Heart right ventricle (tissue), 16 donors: ENCODE measurements at regions of chr9 and their contacts with region 1.

Region 1: DNA sequence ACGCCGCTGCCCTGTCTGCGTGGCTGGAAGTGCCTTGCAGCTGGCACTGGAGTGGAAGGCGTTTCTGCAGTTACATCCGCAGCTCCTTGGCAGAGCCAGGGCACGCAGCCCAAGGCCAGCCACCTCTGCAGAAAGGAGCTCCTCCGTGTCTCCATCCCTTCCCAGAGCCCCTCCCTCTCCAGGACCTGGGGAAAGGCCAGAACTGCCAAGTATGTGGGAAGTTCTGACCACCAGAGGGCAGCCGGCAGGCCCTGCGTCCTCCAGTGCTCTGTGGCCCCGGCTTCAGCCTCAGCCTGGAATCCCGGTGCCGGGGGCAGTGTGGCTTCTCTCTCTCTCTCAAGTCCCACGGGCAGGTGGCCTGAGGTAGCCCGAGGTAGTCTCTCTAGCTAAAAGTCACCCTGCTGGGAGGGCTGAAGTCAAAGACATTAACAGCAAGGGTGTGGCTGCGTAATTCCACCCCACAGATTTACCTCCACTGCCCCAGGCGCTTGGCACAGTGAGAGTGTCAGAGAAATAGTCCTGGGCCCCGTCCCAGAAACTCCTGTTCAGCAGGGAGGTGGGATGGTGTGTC is 101.7 kb upstream of the FCN2 start:
- DNase-seq: peak; percentile 60 to 65
- ATAC-seq: peak; percentile 63 to 84 (median 74)
- H3K4me3 ChIP-seq: no peak overlapping the region
- H3K27ac ChIP-seq: no peak overlapping the region
- H3K4me1 ChIP-seq: peaks cover 2 to 35% (median 22%) of the 10 kb centered on the region in 9 donors
- H3K27me3 ChIP-seq: no peaks in the 10 kb centered on the region
- CTCF ChIP-seq: peak; percentile 59 to 82 (median 74)

Region 2: DNA sequence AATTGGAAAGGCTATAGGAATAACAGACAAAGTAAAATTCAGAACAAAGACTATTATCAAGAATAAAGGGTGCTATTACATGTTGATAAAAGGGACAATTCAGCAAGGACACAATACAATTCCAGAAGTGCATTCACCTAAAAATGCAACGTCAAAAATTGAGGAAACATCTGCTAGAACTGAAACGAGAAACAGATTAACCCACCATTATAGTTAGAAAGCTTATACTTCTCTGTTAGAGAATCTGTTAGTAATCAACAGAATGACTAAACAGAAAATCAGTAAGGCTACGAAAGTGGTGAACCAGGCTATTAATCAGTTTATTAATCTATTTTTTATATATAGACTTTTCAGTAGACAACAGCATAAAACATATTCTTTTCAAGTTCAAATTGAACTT is 124.0 kb after region 1 on chr9:
- intact Hi-C with region 1: loop called in 4 of 10 experiments (anchors 1 to 10 kb)
- DNase-seq: no peak
- ATAC-seq: no peak
- H3K4me3 ChIP-seq: no peak overlapping the region
- H3K27ac ChIP-seq: peak overlapping the region in 3 of 10 donors; percentile 6 to 51 (median 45)
- H3K4me1 ChIP-seq: peaks cover 0 to 9% (median 3%) of the 10 kb centered on the region in 9 donors
- H3K27me3 ChIP-seq: no peaks in the 10 kb centered on the region
- CTCF ChIP-seq: no peak

Region 3: DNA sequence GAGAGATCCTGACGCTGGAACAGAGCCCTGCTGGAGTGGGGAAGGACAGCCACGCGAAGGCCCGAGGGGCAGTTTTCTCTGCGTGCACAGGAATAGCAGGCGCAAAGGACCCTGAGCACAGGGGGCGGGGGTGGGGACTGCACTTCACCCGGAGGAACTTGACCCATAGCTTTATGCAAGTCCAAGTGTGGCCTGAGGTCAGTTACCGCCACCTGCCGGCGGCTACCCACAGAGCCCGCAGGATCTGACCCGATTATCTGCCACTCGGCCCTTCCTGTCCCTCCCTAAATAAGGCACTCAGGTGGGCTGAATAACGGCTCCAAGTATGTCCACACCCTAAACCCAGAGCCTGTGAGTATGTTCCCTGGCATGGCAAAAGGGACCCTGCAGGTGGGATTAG is 204.1 kb after region 1 on chr9:
- intact Hi-C with region 1: loop called in 7 of 10 experiments (anchors 2 to 10 kb)
- DNase-seq: peak in 1 of 2 donors; percentile 58
- ATAC-seq: peak in 5 of 8 donors; percentile 44 to 67 (median 53)
- H3K4me3 ChIP-seq: no peak overlapping the region
- H3K27ac ChIP-seq: no peak overlapping the region
- H3K4me1 ChIP-seq: peaks cover 0 to 4% (median 0%) of the 10 kb centered on the region in 9 donors
- H3K27me3 ChIP-seq: peaks cover 0 to 11% (median 5%) of the 10 kb centered on the region in 7 donors
- CTCF ChIP-seq: peak; percentile 31 to 70 (median 55)

Region 4: GRCh38 chr9:135085830-135086546 is 307.1 kb after region 1 on chr9:
- intact Hi-C with region 1: loop called in 2 of 10 experiments (anchors 10 kb)
- DNase-seq: peak; percentile 73 to 80
- ATAC-seq: peak; percentile 65 to 91 (median 76)
- H3K4me3 ChIP-seq: peak overlapping the region in 9 of 10 donors; percentile 28 to 53 (median 41)
- H3K27ac ChIP-seq: peak overlapping the region in 3 of 10 donors; percentile 35 to 61 (median 60)
- H3K4me1 ChIP-seq: peaks cover 8 to 39% (median 33%) of the 10 kb centered on the region in 9 donors
- H3K27me3 ChIP-seq: peaks cover 15 to 58% (median 34%) of the 10 kb centered on the region in 7 donors
- CTCF ChIP-seq: peak; percentile 88 to 99 (median 97)